ENCODE measurements at regions of chr7 and their contacts with region 1.

Region 1: GRCh38 chr7:75878769-75879611 is at the start of gene RHBDD2:
- DNase-seq: peak; percentile 95
- ATAC-seq: peak; percentile 98
- H3K4me3 ChIP-seq: peak within 1 kb of the TSS; percentile 59 to 97 (median 81)
- H3K4me3 Mint-ChIP-seq: peak within 1 kb of the TSS; percentile 90
- H3K27ac ChIP-seq: peak within 1 kb of the TSS; percentile 66 to 87
- H3K27ac Mint-ChIP-seq: peak within 1 kb of the TSS; percentile 98
- H3K4me1 ChIP-seq: peaks cover 18 to 20% of the 10 kb centered on the region in 2 donors
- H3K4me1 Mint-ChIP-seq: peaks cover 26% of the 10 kb centered on the region
- H3K27me3 ChIP-seq: no peaks in the 10 kb centered on the region
- H3K27me3 Mint-ChIP-seq: no peaks in the 10 kb centered on the region
- CTCF ChIP-seq: peak; percentile 11
- total RNA-seq, gene RHBDD2: 31.6 and 34.1 TPM in 2 replicates

Region 2: GRCh38 chr7:75835688-75836285 is 43.2 kb before region 1 on chr7:
- CTCF ChIA-PET with region 1: no interaction called
- POLR2A ChIA-PET with region 1: no interaction called
- intact Hi-C with region 1: no loop called
- DNase-seq: no peak
- ATAC-seq: no peak
- H3K4me3 ChIP-seq: no peak overlapping the region
- H3K4me3 Mint-ChIP-seq: no peak overlapping the region
- H3K27ac ChIP-seq: no peak overlapping the region
- H3K27ac Mint-ChIP-seq: no peak overlapping the region
- H3K4me1 ChIP-seq: no peaks in the 10 kb centered on the region
- H3K4me1 Mint-ChIP-seq: no peaks in the 10 kb centered on the region
- H3K27me3 ChIP-seq: no peaks in the 10 kb centered on the region
- H3K27me3 Mint-ChIP-seq: peaks cover 6% of the 10 kb centered on the region
- CTCF ChIP-seq: no peak

Region 3: GRCh38 chr7:75994388-75995051 is 115.5 kb after region 1 on chr7 and contains the start of gene TMEM120A:
- CTCF ChIA-PET with region 1: no interaction called
- POLR2A ChIA-PET with region 1: interaction called, 4 read pairs
- intact Hi-C with region 1: loop called (anchors 2 kb)
- DNase-seq: peak; percentile 93
- ATAC-seq: peak; percentile 99
- H3K4me3 ChIP-seq: peak within 1 kb of the TSS; percentile 17 to 94 (median 90)
- H3K4me3 Mint-ChIP-seq: peak within 1 kb of the TSS; percentile 80
- H3K27ac ChIP-seq: peak within 1 kb of the TSS in 1 of 2 donors; percentile 70
- H3K27ac Mint-ChIP-seq: peak within 1 kb of the TSS; percentile 67
- H3K4me1 ChIP-seq: peaks cover 8 to 22% of the 10 kb centered on the region in 2 donors
- H3K4me1 Mint-ChIP-seq: peaks cover 36% of the 10 kb centered on the region
- H3K27me3 ChIP-seq: no peaks in the 10 kb centered on the region
- H3K27me3 Mint-ChIP-seq: no peaks in the 10 kb centered on the region
- CTCF ChIP-seq: no peak
- total RNA-seq, gene TMEM120A: 49.3 and 52.6 TPM in 2 replicates

Region 4: GRCh38 chr7:76047811-76048667 is 169.0 kb after region 1 on chr7 and contains the starts of genes MDH2 and STYXL1:
- CTCF ChIA-PET with region 1: no interaction called
- POLR2A ChIA-PET with region 1: interaction called, 11 read pairs
- intact Hi-C with region 1: loop called (anchors 1 kb)
- DNase-seq: peak; percentile 90
- ATAC-seq: peak; percentile 93
- H3K4me3 ChIP-seq: peak within 1 kb of the TSS; percentile 91 to 99 (median 99)
- H3K4me3 Mint-ChIP-seq: peak within 1 kb of the TSS; percentile 94
- H3K27ac ChIP-seq: peak within 1 kb of the TSS; percentile 77 to 91
- H3K27ac Mint-ChIP-seq: peak within 1 kb of the TSS; percentile 93
- H3K4me1 ChIP-seq: peaks cover 14 to 16% of the 10 kb centered on the region in 2 donors
- H3K4me1 Mint-ChIP-seq: peaks cover 44% of the 10 kb centered on the region
- H3K27me3 ChIP-seq: no peaks in the 10 kb centered on the region
- H3K27me3 Mint-ChIP-seq: no peaks in the 10 kb centered on the region
- CTCF ChIP-seq: no peak
- total RNA-seq, gene MDH2: 77.1 and 77.2 TPM in 2 replicates
- total RNA-seq, gene STYXL1: 15.2 and 17.8 TPM in 2 replicates